GM12878 (cell line): ENCODE measurements at regions of chr9 and their contacts with region 1.

Region 1: DNA sequence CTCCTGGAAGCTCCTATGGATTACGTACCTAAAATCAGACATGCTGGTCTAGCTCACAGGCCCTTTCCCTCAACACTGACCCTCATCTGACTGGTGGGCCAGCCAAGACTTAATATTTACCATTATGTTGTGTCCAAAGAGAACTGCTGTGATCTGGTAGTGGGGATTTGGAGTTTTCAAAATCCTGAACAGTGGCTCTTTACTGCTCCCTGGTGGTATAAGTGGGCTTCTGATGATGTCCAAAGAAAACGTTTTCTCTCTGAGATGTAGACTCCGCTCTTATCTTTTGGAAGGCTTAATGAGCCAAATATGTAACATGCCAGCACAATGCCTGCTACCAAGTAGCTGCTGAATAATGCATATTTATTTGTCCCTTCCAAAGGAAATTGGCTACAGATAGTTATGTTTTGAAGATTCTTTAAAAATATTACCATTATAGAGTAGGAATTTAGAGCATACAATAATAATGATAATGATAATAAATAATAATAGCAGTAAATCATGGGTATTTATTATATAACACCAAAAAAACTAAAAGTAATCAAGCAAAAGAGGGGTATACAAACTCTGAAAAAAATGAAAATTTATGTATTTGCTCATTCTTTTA is 406.6 kb upstream of the TNC start:
- DNase-seq: no peak
- ATAC-seq: peak; percentile 69
- H3K4me3 ChIP-seq: no peak overlapping the region
- H3K27ac ChIP-seq: no peak overlapping the region
- H3K4me1 ChIP-seq: no peaks in the 10 kb centered on the region
- H3K27me3 ChIP-seq: no peaks in the 10 kb centered on the region
- CTCF ChIP-seq: peak; percentile 54 to 68 (median 59); a peak in 5 of 6 replicates
- EP300 ChIP-seq: no peak
- POLR2A ChIP-seq: no peak
- RAD21 ChIP-seq: peak; percentile 84

Region 2: DNA sequence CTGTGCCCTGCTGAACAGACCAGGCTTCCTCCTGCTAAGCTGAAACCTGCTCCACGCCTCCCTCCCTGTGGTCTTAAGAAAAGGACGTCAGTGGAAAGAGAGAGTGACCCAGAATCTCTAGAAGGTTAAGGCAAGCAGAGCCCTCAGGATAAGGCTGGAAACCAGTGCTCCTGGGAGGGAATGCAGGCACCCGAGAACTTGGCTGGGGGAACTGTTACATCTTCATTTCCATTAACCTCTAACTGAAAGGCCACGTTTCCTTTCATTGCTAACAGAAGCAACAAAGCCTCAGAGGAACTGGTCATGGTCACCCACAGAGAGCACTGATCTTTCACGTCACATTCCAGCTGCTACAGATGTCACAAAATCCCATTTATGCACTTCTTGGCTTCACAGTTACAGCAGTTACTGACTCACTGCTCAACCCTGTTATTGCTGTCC is 1110.7 kb before region 1 on chr9:
- CTCF ChIA-PET with region 1: no interaction called
- POLR2A ChIA-PET with region 1: no interaction called
- RAD21 ChIA-PET with region 1: no interaction called
- SMC1A ChIA-PET with region 1: no interaction called
- in situ Hi-C with region 1: loop called (anchors 10 kb)
- intact Hi-C with region 1: no loop called
- DNase-seq: no peak
- ATAC-seq: peak; percentile 10; the same call in 2 of the 3 replicates
- H3K4me3 ChIP-seq: no peak overlapping the region
- H3K27ac ChIP-seq: no peak overlapping the region
- H3K4me1 ChIP-seq: peaks cover 4% of the 10 kb centered on the region; the same call in 1 of the 2 replicates
- H3K27me3 ChIP-seq: no peaks in the 10 kb centered on the region
- CTCF ChIP-seq: no peak
- EP300 ChIP-seq: no peak
- POLR2A ChIP-seq: no peak
- RAD21 ChIP-seq: no peak

Region 3: GRCh38 chr9:115013998-115014397 is 510.6 kb before region 1 on chr9:
- CTCF ChIA-PET with region 1: interaction called, 5 read pairs
- POLR2A ChIA-PET with region 1: no interaction called
- RAD21 ChIA-PET with region 1: interaction called, 3 read pairs
- SMC1A ChIA-PET with region 1: interaction called, 3 read pairs
- in situ Hi-C with region 1: loop called (anchors 10 kb)
- intact Hi-C with region 1: loop called (anchors 2 kb)
- DNase-seq: no peak
- ATAC-seq: peak; percentile 90
- H3K4me3 ChIP-seq: no peak overlapping the region
- H3K27ac ChIP-seq: no peak overlapping the region
- H3K4me1 ChIP-seq: no peaks in the 10 kb centered on the region
- H3K27me3 ChIP-seq: peaks cover 0 to 2% of the 10 kb centered on the region in 2 experiments; a peak in 3 of 4 replicates
- CTCF ChIP-seq: peak; percentile 63 to 86 (median 68)
- EP300 ChIP-seq: no peak
- POLR2A ChIP-seq: no peak
- RAD21 ChIP-seq: peak; percentile 98

Region 4: GRCh38 chr9:115204904-115205453 is 319.6 kb before region 1 on chr9:
- CTCF ChIA-PET with region 1: no interaction called
- POLR2A ChIA-PET with region 1: no interaction called
- RAD21 ChIA-PET with region 1: no interaction called
- SMC1A ChIA-PET with region 1: no interaction called
- in situ Hi-C with region 1: no loop called
- intact Hi-C with region 1: loop called (anchors 5 kb)
- DNase-seq: no peak
- ATAC-seq: peak; percentile 72
- H3K4me3 ChIP-seq: no peak overlapping the region
- H3K27ac ChIP-seq: no peak overlapping the region
- H3K4me1 ChIP-seq: peaks cover 22% of the 10 kb centered on the region
- H3K27me3 ChIP-seq: no peaks in the 10 kb centered on the region
- CTCF ChIP-seq: no peak
- EP300 ChIP-seq: peak in 1 of 2 experiments; percentile 13; a peak in 1 of 4 replicates
- POLR2A ChIP-seq: no peak
- RAD21 ChIP-seq: no peak

Region 5: GRCh38 chr9:115349526-115349925 is 175.0 kb before region 1 on chr9:
- CTCF ChIA-PET with region 1: interaction called, 11 read pairs
- POLR2A ChIA-PET with region 1: no interaction called
- RAD21 ChIA-PET with region 1: interaction called, 6 read pairs
- SMC1A ChIA-PET with region 1: interaction called, 6 read pairs
- in situ Hi-C with region 1: no loop called
- intact Hi-C with region 1: loop called (anchors 5 kb)
- DNase-seq: no peak
- ATAC-seq: no peak
- H3K4me3 ChIP-seq: no peak overlapping the region
- H3K27ac ChIP-seq: no peak overlapping the region
- H3K4me1 ChIP-seq: no peaks in the 10 kb centered on the region
- H3K27me3 ChIP-seq: no peaks in the 10 kb centered on the region
- CTCF ChIP-seq: no peak
- EP300 ChIP-seq: no peak
- POLR2A ChIP-seq: no peak
- RAD21 ChIP-seq: no peak